Posterior vena cava (tissue), 2 donors: ENCODE measurements at regions of chr2 and their contacts with region 1.

Region 1: DNA sequence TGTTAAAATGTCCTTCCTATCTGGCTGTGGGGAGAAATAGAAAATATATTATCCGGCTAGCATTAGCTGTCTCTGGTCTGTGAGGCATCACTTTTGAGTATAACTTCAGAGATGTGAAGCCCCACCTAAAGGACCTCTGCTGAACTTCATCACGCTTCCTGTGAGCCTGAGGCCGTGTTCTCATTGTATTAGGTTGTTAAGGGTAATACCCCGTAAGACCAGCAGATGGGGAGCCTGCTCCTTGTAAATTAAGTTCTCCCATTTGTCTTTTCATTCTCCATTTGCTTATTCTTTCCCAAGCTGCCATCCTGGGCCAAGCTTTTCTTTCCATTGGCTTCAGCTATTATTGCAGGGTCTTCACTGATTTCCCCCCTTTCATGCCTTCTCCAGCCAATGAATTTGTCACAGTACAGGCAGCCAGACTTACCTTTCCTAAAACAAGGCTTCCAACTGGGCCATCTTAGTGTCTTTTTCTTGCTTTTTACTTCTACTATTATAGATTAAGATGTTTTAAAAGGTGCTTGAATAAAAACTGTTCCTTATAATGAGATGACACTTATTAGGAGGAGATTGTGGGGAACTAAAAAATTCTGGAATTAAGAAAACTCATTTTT is 12.4 kb downstream of the NIF3L1 start:
- DNase-seq: no peak

Region 2: DNA sequence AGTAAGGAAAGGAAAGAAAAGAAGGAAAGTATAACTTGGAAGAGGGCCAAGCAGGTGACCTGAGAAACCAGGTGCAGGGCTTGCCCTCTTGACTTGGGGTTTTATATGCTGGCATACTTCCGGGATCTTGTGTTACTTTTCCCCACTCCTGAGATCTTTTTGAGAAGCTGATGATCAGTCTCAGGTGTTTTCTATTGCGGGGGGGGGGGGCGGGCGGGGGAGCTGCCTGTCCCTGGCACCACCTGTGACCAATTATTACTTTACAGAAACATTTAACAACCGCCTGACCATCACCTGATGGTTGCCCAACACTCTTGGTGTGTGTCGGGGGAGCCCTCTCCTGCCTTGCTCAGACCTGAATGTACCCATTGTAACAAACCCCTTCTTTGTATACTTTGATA is 274.5 kb after region 1 on chr2:
- intact Hi-C with region 1: loop called in 1 of 2 experiments (anchors 5 kb)
- DNase-seq: no peak